H1 (cell line): ENCODE measurements at regions of chr20 and their contacts with region 1.

Region 1: DNA sequence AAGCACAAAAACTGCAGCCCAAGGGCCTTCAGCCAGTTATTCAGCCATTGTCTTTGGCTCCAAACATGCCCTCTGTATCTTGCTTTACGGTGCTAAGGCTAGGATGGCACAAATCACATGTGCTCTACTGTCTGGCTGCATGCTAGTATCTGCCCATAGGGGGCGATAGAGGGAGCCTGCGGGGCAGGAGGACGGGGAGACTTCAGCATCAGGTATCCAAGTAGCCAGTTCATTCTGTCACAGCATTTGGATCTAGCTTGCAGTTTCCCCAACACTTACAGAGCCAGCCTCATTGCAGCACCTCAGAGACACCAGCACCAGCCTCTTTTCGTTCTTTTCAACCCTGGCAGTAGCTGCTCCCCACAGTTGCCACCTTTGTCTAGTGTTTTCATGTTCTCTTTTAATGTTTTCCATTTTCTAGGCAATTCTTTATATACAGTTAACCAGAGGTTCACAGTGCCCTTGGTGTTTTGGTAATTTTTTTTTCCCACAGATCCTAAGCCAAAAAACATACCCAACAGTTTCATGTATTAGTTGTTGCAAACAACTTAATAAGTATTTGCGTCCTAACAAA is 705.9 kb downstream of the PTPRT start:
- DNase-seq: peak; percentile 59 to 87
- H3K4me3 ChIP-seq: no peak overlapping the region
- H3K27ac ChIP-seq: no peak overlapping the region
- H3K4me1 ChIP-seq: no peaks in the 10 kb centered on the region
- H3K27me3 ChIP-seq: no peaks in the 10 kb centered on the region; a peak in 1 of 7 replicates
- CTCF ChIP-seq: peak; percentile 81 to 99 (median 91)
- EP300 ChIP-seq: no peak
- POLR2A ChIP-seq: no peak
- RAD21 ChIP-seq: peak; percentile 68 to 83

Region 2: GRCh38 chr20:42370075-42370474 is 113.7 kb before region 1 on chr20:
- CTCF ChIA-PET with region 1: no interaction called
- POLR2A ChIA-PET with region 1: no interaction called
- DNase-seq: no peak
- H3K4me3 ChIP-seq: no peak overlapping the region
- H3K27ac ChIP-seq: no peak overlapping the region
- H3K4me1 ChIP-seq: no peaks in the 10 kb centered on the region
- H3K27me3 ChIP-seq: no peaks in the 10 kb centered on the region
- CTCF ChIP-seq: no peak
- EP300 ChIP-seq: no peak
- POLR2A ChIP-seq: no peak
- RAD21 ChIP-seq: no peak

Region 3: DNA sequence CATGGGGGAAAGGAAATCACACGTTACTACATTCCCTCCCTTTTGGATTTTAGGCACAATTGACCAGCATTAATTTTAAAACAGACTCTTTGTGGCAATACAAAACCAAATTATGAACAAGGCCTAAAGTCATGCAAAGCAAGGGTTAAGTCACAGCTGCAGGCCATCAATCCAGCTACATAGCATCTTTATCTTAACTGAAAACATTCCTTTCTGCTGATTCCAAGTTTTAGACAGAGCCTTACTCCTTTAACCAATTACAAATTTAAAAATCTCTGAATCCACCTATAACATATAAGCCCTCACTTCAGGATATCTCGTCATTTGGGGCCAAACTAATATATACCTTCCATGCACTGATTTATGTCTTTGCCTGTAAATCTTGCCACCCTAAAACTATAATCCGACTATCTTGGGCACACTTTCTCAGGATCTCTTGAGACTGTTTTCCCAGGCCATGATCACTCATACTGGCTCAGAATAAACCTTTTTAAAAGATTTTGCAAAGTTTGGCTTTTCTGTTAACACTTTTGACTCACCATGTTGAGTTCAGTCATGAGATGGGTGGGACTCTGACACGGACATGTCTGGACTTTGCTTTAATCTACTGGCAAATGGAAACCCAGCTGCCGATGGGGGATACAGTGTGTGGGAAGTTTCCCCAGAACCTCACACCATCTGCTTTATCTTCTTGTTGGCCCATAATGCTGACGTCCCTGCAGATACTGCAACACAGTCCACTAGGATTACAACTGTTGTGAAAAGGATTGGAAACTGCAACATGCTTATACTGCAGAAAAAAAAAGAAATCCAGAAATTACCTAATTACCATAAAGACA is 51.1 kb before region 1 on chr20:
- CTCF ChIA-PET with region 1: no interaction called
- POLR2A ChIA-PET with region 1: no interaction called
- DNase-seq: no peak
- H3K4me3 ChIP-seq: no peak overlapping the region
- H3K27ac ChIP-seq: no peak overlapping the region
- H3K4me1 ChIP-seq: no peaks in the 10 kb centered on the region
- H3K27me3 ChIP-seq: no peaks in the 10 kb centered on the region
- CTCF ChIP-seq: no peak
- EP300 ChIP-seq: no peak
- POLR2A ChIP-seq: no peak
- RAD21 ChIP-seq: no peak

Region 4: DNA sequence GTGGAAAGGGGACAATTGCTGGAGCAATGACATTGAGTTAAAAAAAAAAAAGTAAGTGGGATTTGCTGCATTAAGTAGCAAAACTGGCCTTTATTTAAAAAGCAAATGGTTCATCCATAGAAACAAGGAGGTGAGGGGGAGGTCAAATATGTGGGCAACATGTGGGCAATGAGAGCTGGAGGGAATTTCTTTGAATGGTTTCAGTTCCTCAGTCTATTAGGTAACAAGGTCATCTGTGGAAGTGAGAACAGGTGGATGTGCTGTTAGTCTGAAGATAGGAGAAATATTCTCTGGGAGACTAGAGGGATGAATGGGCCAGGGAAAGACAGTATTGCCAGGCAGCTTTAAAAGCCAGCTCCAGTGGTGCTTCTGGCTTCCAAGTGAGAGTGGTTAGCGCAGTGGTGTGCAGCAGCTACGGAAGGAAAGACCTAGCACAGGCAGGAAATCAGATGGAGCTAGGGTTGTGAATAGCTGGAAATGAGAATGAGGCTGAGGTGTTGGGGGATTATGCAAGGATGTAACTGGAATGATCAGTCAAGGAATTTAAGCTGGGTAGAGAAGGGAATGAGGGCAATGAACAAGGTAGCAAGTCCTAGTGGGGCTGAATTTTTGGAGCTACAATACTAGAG is 21.7 kb before region 1 on chr20:
- CTCF ChIA-PET with region 1: interaction called, 13 read pairs
- POLR2A ChIA-PET with region 1: no interaction called
- DNase-seq: no peak
- H3K4me3 ChIP-seq: no peak overlapping the region
- H3K27ac ChIP-seq: no peak overlapping the region
- H3K4me1 ChIP-seq: peaks cover 0 to 8% (median 3%) of the 10 kb centered on the region in 4 experiments; a peak in 2 of 7 replicates
- H3K27me3 ChIP-seq: no peaks in the 10 kb centered on the region
- CTCF ChIP-seq: no peak
- EP300 ChIP-seq: no peak
- POLR2A ChIP-seq: no peak
- RAD21 ChIP-seq: no peak

Region 5: GRCh38 chr20:42721923-42722322 is 238.1 kb after region 1 on chr20:
- CTCF ChIA-PET with region 1: no interaction called
- POLR2A ChIA-PET with region 1: no interaction called
- DNase-seq: no peak
- H3K4me3 ChIP-seq: no peak overlapping the region
- H3K27ac ChIP-seq: no peak overlapping the region
- H3K4me1 ChIP-seq: peaks cover 0 to 3% (median 0%) of the 10 kb centered on the region in 4 experiments; a peak in 1 of 7 replicates
- H3K27me3 ChIP-seq: no peaks in the 10 kb centered on the region
- CTCF ChIP-seq: no peak
- EP300 ChIP-seq: no peak
- POLR2A ChIP-seq: no peak
- RAD21 ChIP-seq: no peak